Esophagus muscularis mucosa (tissue), 4 donors: ENCODE measurements at regions of chr17 and their contacts with region 1.

Region 1: DNA sequence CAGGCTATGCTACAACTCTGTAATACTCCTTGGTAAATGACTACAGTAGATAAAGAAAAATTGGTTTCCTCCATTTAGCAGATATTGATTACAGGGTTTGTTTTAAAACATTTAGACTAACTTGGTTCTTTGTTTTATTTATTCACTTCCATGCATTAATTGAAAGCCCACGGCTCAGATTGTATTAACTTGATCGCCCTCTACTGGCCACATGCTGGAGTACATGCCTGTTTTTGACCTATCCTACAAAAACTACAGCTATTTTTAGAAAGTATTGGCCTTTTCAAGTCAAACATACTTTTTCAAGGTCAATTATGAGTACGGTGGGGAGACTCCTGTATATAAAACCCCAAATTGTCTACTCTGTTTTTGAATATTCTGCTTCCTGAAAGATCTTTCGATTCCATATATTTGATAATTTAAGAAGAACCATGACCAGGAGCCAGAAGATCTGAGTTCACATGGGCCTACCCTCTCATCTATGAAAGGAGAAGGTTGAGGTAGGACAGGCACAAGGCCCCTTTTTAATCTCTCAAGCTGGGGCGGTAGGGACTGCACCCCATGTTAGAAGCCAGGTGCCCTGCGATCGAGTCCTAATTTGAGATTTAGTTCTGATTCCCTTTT is 51.8 kb downstream of the CA10 start:
- DNase-seq: no peak
- H3K4me3 ChIP-seq: no peak overlapping the region
- H3K27ac ChIP-seq: no peak overlapping the region
- H3K4me1 ChIP-seq: peaks cover 0 to 8% (median 0%) of the 10 kb centered on the region in 4 donors
- H3K27me3 ChIP-seq: no peaks in the 10 kb centered on the region
- CTCF ChIP-seq: peak; percentile 75 to 78 (median 75)
- EP300 ChIP-seq: no peak
- POLR2A ChIP-seq: no peak

Region 2: GRCh38 chr17:51764387-51764972 is 342.3 kb before region 1 on chr17:
- intact Hi-C with region 1: loop called (anchors 2 kb)
- DNase-seq: no peak
- H3K4me3 ChIP-seq: no peak overlapping the region
- H3K27ac ChIP-seq: no peak overlapping the region
- H3K4me1 ChIP-seq: no peaks in the 10 kb centered on the region
- H3K27me3 ChIP-seq: no peaks in the 10 kb centered on the region
- CTCF ChIP-seq: peak; percentile 60 to 87 (median 72)
- EP300 ChIP-seq: no peak
- POLR2A ChIP-seq: no peak

Region 3: GRCh38 chr17:51860954-51861561 is 245.7 kb before region 1 on chr17:
- intact Hi-C with region 1: loop called (anchors 5 kb)
- DNase-seq: no peak
- H3K4me3 ChIP-seq: no peak overlapping the region
- H3K27ac ChIP-seq: no peak overlapping the region
- H3K4me1 ChIP-seq: no peaks in the 10 kb centered on the region
- H3K27me3 ChIP-seq: no peaks in the 10 kb centered on the region
- CTCF ChIP-seq: peak; percentile 25 to 44 (median 38)
- EP300 ChIP-seq: no peak
- POLR2A ChIP-seq: no peak